ENCODE measurements at regions of chr10 and their contacts with region 1.

Region 1: GRCh38 chr10:93554760-93555432 is 11.6 kb upstream of the FFAR4 start:
- DNase-seq: peak; percentile 47
- ATAC-seq: peak; percentile 99
- H3K4me3 ChIP-seq: no peak overlapping the region
- H3K27ac ChIP-seq: no peak overlapping the region
- H3K4me1 ChIP-seq: peaks cover 0 to 7% of the 10 kb centered on the region in 2 experiments; a peak in 2 of 4 replicates
- H3K27me3 ChIP-seq: no peaks in the 10 kb centered on the region
- CTCF ChIP-seq: peak; percentile 49 to 86 (median 79); a peak in 5 of 6 replicates
- POLR2A ChIP-seq: no peak
- RAD21 ChIP-seq: peak; percentile 73

Region 2: DNA sequence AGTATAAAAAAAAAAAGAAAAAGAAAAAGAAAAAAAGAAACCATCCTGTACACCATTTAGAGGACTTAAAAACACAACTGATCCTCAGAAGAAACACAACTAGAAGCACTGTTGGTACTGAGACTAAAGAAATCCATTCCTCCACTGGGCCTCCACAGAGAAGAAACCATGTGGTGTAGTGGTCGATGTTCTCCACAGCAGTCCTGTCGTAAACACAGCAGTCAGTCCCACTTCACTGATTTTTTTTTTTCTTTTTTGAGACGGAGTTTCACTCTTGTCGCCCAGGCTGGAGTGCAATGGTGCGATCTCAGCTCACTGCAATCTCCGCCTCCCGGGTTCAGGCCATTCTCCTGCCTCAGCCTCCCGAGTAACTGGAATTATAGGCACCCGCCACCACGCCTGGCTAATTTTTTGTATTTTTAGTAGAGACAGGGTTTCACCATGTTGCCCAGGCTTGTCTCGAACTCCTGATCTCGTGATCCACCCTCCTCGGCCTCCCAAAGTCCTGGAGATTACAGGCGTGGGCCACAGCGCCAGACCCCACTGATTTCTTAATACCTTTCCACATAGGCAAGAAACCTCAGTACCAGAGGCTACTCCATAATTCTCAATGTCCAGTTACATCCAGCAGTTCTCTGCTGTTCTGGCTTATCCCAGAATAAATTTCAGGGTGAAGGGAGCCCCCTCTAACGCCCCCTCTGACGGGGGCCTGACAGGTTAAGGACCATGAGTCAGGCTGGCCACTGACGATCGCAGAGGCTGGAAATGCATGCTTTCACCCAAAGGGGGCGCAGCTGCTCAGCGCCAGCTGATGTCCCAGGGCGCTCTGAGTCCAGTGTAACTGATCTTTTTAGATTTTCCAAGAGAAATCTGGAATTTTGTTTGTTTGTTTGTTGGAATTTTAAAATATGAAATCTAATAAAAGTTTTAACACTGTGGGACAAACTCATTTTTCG is 13.2 kb before region 1 on chr10:
- CTCF ChIA-PET with region 1: interaction called, 11 read pairs
- POLR2A ChIA-PET with region 1: no interaction called
- RAD21 ChIA-PET with region 1: no interaction called
- intact Hi-C with region 1: no loop called
- DNase-seq: peak; percentile 27
- ATAC-seq: peak; percentile 99
- H3K4me3 ChIP-seq: no peak overlapping the region
- H3K27ac ChIP-seq: no peak overlapping the region
- H3K4me1 ChIP-seq: no peaks in the 10 kb centered on the region
- H3K27me3 ChIP-seq: no peaks in the 10 kb centered on the region
- CTCF ChIP-seq: peak; percentile 43 to 95 (median 93); a peak in 5 of 6 replicates
- POLR2A ChIP-seq: no peak
- RAD21 ChIP-seq: peak; percentile 62

Region 3: GRCh38 chr10:93680412-93681047 is 125.6 kb after region 1 on chr10:
- CTCF ChIA-PET with region 1: interaction called, 71 read pairs
- POLR2A ChIA-PET with region 1: no interaction called
- RAD21 ChIA-PET with region 1: interaction called, 8 to 16 read pairs
- intact Hi-C with region 1: loop called (anchors 1 kb)
- DNase-seq: peak; percentile 34
- ATAC-seq: peak; percentile 74
- H3K4me3 ChIP-seq: no peak overlapping the region
- H3K27ac ChIP-seq: no peak overlapping the region
- H3K4me1 ChIP-seq: no peaks in the 10 kb centered on the region
- H3K27me3 ChIP-seq: no peaks in the 10 kb centered on the region
- CTCF ChIP-seq: peak; percentile 32 to 65 (median 60); a peak in 5 of 6 replicates
- POLR2A ChIP-seq: no peak
- RAD21 ChIP-seq: peak; percentile 76

Region 4: GRCh38 chr10:93859049-93859655 is 304.3 kb after region 1 on chr10:
- CTCF ChIA-PET with region 1: interaction called, 13 read pairs
- POLR2A ChIA-PET with region 1: no interaction called
- RAD21 ChIA-PET with region 1: no interaction called
- intact Hi-C with region 1: no loop called
- DNase-seq: peak; percentile 3
- ATAC-seq: peak; percentile 57
- H3K4me3 ChIP-seq: no peak overlapping the region
- H3K27ac ChIP-seq: no peak overlapping the region
- H3K4me1 ChIP-seq: no peaks in the 10 kb centered on the region
- H3K27me3 ChIP-seq: no peaks in the 10 kb centered on the region
- CTCF ChIP-seq: peak; percentile 19 to 71 (median 63); a peak in 5 of 6 replicates
- POLR2A ChIP-seq: no peak
- RAD21 ChIP-seq: peak; percentile 74